CD4-positive, alpha-beta memory T cell (primary cell): ENCODE measurements at regions of chr2 and their contacts with region 1.

Region 1: DNA sequence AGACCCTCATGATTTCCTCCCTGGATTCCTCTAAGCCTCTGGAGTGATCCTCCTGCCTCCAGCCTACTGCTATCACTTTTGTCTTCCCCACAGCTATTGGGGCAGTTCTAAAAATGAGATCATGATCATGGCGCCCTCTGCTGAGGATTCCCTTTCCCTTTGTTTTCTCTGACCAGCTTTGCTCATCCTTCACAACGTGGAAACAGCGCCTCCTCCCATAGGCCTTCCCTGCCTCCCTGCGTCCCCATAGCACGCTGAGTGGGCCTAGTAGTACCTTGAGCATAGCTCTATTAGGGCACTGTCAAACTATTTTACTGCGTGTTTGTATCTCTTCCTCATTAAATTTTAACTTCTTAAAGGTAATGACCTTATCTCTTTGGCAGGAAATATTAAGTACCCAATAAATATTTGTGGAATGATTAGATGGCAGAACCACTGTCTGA is 207.0 kb upstream of the FANCL start:
- DNase-seq: no peak
- H3K4me3 ChIP-seq: no peak overlapping the region
- H3K4me3 Mint-ChIP-seq: no peak overlapping the region
- H3K27ac ChIP-seq: no peak overlapping the region
- H3K27ac Mint-ChIP-seq: no peak overlapping the region
- H3K4me1 ChIP-seq: no peaks in the 10 kb centered on the region
- H3K4me1 Mint-ChIP-seq: no peaks in the 10 kb centered on the region
- H3K27me3 ChIP-seq: no peaks in the 10 kb centered on the region
- H3K27me3 Mint-ChIP-seq: peaks cover 2 to 7% of the 10 kb centered on the region in 2 donors

Region 2: GRCh38 chr2:57759822-57760300 is 688.2 kb before region 1 on chr2:
- CTCF ChIA-PET with region 1: interaction called, 3 read pairs
- POLR2A ChIA-PET with region 1: no interaction called
- intact Hi-C with region 1: loop called (anchors 10 kb)
- DNase-seq: peak; percentile 47 to 63 (median 54)
- H3K4me3 ChIP-seq: no peak overlapping the region
- H3K4me3 Mint-ChIP-seq: peak overlapping the region in 4 of 8 donors; percentile 15 to 40 (median 22)
- H3K27ac ChIP-seq: no peak overlapping the region
- H3K27ac Mint-ChIP-seq: no peak overlapping the region
- H3K4me1 ChIP-seq: peaks cover 6% of the 10 kb centered on the region
- H3K4me1 Mint-ChIP-seq: peaks cover 0 to 5% (median 2%) of the 10 kb centered on the region in 4 donors
- H3K27me3 ChIP-seq: no peaks in the 10 kb centered on the region
- H3K27me3 Mint-ChIP-seq: peaks cover 3 to 7% of the 10 kb centered on the region in 2 donors

Region 3: GRCh38 chr2:57906152-57906732 is 541.8 kb before region 1 on chr2:
- CTCF ChIA-PET with region 1: interaction called, 4 read pairs
- POLR2A ChIA-PET with region 1: no interaction called
- intact Hi-C with region 1: loop called (anchors 5 kb)
- DNase-seq: peak in 3 of 5 donors; percentile 17 to 21 (median 21)
- H3K4me3 ChIP-seq: no peak overlapping the region
- H3K4me3 Mint-ChIP-seq: no peak overlapping the region
- H3K27ac ChIP-seq: no peak overlapping the region
- H3K27ac Mint-ChIP-seq: no peak overlapping the region
- H3K4me1 ChIP-seq: peaks cover 28% of the 10 kb centered on the region
- H3K4me1 Mint-ChIP-seq: peaks cover 18 to 26% (median 20%) of the 10 kb centered on the region in 4 donors
- H3K27me3 ChIP-seq: no peaks in the 10 kb centered on the region
- H3K27me3 Mint-ChIP-seq: no peaks in the 10 kb centered on the region

Region 4: DNA sequence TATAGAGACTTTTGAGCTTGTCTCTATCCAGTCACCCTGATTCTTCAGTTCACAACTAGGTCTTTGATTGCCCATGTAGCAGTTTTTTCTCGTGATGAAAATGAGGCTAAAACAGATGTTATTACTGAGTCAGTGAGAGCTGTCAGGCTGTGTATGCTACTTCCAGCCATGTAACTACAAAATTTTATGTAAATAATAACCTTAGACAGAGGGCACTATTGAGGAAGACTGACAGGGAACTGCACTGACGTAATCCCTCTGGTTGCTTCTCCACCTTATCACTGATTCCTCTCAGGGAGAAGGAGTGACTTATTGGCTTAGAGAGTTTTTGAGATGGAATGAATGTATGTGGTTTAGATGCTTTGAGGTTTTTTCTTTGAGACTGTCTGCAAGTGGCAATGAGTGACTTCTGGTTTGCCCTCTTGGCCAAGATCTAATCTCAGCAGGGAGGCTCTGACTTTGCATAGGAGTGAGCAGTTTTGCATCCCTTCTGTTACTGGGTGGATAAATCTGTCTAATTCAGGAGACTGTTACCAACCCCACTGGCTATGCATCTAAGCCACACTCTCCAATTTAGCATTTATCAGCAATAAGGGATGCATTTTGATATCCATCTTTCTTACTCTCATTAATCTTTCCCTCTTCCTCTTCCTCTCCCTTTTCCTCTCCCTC is 348.3 kb after region 1 on chr2:
- CTCF ChIA-PET with region 1: no interaction called
- POLR2A ChIA-PET with region 1: no interaction called
- intact Hi-C with region 1: no loop called
- DNase-seq: no peak
- H3K4me3 ChIP-seq: no peak overlapping the region
- H3K4me3 Mint-ChIP-seq: no peak overlapping the region
- H3K27ac ChIP-seq: no peak overlapping the region
- H3K27ac Mint-ChIP-seq: no peak overlapping the region
- H3K4me1 ChIP-seq: no peaks in the 10 kb centered on the region
- H3K4me1 Mint-ChIP-seq: no peaks in the 10 kb centered on the region
- H3K27me3 ChIP-seq: no peaks in the 10 kb centered on the region
- H3K27me3 Mint-ChIP-seq: no peaks in the 10 kb centered on the region

Region 5: DNA sequence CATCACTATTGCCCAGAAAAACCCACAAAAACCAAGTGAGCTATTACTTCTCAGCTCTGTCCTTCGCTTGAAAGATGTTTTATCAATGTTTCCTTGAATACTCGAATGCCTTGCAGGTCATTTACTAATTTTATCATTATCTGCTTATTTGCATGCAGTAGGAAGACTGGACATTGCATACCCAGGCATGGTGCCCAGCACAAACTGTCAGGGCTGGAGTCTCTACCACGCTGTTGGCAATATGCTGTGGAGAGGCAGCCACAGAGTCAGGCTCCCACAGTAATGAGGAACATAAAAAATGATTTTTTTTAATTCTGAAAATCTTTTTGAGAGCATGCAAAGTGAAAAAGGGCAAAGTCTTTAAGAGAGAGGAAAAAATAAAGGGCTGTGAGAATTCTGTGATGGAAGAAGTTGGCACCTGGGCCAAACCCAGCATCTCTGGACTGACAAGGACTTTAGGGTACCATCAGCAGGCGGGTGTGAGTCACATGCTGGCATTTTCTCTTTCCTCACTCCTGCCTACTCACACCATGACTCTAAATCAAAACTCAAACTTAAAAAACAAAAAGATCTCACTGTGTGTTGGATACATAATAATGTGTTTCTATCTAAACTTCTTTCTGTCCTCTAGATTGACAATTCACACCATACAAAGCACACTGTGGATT is 502.8 kb after region 1 on chr2:
- CTCF ChIA-PET with region 1: no interaction called
- POLR2A ChIA-PET with region 1: no interaction called
- intact Hi-C with region 1: no loop called
- DNase-seq: no peak
- H3K4me3 ChIP-seq: no peak overlapping the region
- H3K4me3 Mint-ChIP-seq: no peak overlapping the region
- H3K27ac ChIP-seq: no peak overlapping the region
- H3K27ac Mint-ChIP-seq: no peak overlapping the region
- H3K4me1 ChIP-seq: no peaks in the 10 kb centered on the region
- H3K4me1 Mint-ChIP-seq: no peaks in the 10 kb centered on the region
- H3K27me3 ChIP-seq: no peaks in the 10 kb centered on the region
- H3K27me3 Mint-ChIP-seq: no peaks in the 10 kb centered on the region